Right ventricle myocardium inferior (tissue), 1 donor: ENCODE measurements at regions of chr5 and their contacts with region 1.

Region 1: DNA sequence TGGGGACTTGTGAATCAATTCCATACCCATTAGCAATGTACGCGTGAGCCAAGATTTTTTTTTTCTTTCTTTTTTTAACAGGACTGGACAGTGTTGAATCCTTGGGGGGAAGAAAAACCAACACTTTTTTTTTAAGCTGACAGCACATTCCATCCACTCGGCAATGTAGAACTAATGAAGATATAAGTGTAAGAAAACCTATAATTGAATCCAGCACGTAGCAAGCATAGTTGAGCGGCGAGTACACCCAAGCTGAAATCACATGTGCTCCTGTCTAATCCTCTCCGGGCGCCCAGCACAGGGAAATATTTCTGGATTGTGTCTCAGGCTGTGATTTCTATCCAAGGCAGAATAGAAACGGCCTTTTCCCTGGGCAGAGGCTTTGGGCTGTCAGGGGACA is 118.2 kb downstream of the BOD1 start:
- DNase-seq: no peak
- ATAC-seq: peak; percentile 26

Region 2: DNA sequence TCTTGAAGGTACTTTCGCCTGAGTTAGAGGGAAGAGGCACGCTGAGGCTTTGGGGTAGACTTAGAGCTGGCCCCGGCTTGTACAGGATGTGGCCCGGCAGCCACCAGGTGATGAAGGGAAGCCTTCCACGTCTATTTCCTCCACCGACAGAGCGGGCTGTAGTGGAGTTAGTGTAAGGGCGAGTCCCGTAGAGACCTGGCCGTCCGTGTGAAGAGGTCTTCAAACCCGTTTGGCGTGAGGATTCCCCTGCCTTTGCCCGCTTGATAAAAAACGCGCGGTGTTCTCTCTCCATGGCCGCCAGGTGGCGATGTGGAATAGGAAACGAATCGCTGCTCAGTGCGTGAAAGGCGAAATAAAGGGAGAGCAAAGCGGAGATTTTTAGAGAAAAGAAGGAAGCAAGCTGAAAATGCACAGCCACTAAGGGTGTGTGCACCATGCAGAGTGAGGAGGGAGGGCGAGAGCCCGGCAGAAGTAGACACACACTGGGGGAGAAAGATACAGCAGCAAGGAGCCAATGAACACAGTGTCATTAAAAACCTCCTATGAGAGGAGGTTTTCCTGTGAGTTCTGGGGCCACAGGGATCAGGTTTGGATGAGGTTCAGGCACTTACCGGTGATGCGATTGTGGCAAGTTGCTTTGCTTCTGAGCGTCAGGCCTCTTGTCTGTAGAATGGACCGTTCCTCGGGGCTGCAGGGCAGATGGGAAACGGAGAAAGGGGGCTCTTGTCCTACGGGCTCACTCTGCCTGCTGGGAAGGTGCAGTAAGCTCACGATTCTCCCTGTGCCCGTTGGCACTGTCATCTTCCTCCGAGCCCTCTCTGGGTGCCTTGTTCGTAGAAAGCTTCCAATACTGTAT is 204.2 kb before region 1 on chr5:
- intact Hi-C with region 1: loop called (anchors 10 kb)
- DNase-seq: peak; percentile 89
- ATAC-seq: peak; percentile 55

Region 3: DNA sequence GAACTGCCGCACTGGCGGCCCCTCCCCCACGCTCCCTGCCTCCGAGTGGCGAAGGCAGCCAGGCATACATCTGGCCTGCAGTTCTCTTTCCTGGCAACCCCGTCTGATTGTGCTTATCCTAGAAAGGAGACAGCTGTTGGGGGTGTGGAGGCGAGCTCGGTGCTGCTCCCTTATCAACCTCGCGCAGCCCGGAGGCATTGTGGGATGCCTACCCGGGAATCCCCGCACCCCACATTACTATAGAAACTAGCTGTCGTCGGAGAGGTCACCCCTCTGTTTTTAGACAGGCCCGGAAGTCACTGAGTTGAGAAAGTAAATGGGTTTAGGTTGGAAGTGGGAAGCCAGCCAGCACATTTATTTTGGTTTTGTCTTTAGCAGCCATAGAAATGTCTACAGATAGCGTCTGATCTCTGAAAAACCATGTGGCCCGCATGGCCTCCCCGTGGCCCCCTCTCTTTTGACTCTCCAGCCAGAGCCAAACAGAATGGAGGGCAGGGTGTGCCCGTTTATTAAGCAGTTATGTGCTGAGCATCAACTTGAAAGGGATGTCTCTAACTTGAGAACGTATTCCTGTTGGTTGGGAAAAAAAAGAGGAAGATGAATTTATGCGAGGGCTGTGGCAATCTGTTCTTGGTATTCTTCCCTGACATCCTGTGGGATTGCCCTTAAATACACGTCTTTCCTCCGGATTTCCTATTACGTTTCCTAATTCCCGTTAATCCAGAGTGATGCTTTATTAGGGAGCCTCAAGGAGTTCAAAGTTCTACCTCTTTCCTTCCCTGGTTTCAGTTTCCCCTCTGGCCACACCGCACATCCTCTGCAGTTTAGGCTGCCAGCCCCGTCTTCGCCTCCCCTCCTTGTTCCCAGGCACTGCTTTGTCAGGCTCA is 173.9 kb before region 1 on chr5:
- intact Hi-C with region 1: loop called (anchors 5 kb)
- DNase-seq: peak; percentile 94
- ATAC-seq: peak; percentile 64

Region 4: DNA sequence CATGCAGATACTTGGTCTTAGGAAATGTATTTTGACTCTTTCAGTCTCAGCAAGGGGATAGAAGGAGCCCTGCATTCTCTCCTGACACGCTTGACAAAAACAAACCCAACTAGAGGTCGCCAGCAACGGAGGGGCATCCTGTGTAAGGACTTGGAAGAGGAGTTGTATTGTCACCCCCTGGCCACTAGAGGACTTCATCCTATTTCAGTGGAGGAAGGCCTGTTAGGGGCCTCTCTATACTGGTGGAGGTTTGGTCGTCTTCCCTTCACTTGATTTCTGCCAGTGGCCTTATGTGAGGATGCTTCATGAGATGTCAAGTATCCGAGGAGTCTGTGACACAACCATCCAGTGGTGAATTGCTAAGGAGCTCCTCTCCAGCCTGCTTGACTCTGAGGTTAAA is 47.3 kb before region 1 on chr5:
- intact Hi-C with region 1: loop called (anchors 5 kb)
- DNase-seq: no peak
- ATAC-seq: no peak

Region 5: DNA sequence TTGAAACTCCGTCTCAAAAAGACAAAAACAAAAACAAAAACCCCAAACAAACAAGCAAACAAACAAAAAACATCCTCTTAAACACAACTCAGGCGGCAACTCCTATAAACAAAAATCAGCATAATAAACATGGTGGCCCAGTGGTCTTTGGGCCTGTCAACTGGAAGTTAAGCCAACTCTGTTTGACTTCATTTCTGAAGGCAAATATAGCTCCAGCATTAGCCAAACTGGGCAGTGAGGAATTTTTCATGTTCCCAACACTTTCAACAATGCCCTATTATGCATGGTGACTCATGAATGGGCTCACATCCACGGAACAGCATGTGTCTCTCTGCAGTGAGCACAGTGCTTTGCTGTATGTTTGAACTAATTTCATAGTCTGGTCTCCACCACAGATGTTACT is 26.1 kb before region 1 on chr5:
- intact Hi-C with region 1: loop called (anchors 2 kb)
- DNase-seq: no peak
- ATAC-seq: peak; percentile 95

Region 6: DNA sequence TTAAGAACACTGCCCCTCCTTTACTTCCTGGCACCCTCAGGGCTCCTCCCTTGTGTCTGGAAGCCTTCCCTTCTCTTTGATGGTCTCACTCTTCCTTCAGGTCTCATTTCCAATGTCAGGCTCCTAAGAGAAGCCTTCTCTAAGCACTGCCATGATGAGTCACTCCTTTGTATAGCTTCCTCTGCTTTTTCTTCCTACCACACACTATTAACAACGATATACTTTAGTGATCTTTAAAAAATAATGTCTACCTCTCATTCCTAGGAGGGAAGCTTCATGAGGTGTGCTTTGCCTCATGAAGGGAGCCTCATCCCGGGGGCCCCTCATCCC is 38.0 kb after region 1 on chr5:
- intact Hi-C with region 1: loop called (anchors 5 kb)
- DNase-seq: no peak
- ATAC-seq: no peak